GM12878 (cell line): ENCODE measurements at regions of chr16 and their contacts with region 1.

Region 1: GRCh38 chr16:75555707-75556430 is at the start of gene TMEM231:
- DNase-seq: no peak
- ATAC-seq: peak; percentile 96
- H3K4me3 ChIP-seq: peak within 1 kb of the TSS; percentile 81
- H3K27ac ChIP-seq: peak within 1 kb of the TSS; percentile 65
- H3K4me1 ChIP-seq: peaks cover 4% of the 10 kb centered on the region; the same call in 1 of the 2 replicates
- H3K27me3 ChIP-seq: no peaks in the 10 kb centered on the region
- CTCF ChIP-seq: no peak
- EP300 ChIP-seq: 0 out of 4 replicates have a peak, but pooled peaks of 1 of the 2 experiments have one; percentile 21
- POLR2A ChIP-seq: peak; percentile 72
- RAD21 ChIP-seq: no peak
- polyA plus RNA-seq, gene TMEM231: 1.2 TPM

Region 2: DNA sequence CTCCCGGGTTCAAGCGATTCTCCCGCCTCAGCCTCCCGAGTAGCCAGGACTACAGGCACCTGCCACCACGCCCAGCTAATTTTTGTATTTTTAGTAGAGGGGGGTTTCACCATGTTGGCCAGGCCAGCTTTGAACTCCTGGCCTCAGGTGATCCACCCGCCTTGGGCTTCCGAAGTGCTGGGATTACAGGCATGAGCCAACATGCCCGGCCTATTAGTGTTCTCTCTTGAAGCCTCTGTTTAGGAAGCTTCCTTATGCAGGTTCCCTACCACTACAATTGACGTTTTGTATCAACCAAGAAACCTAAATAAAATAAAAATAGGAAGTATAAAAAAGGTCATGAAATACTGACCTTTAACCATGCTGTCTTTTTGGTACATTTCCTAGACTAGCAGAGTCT is 36.0 kb before region 1 on chr16:
- CTCF ChIA-PET with region 1: interaction called, 32 read pairs
- POLR2A ChIA-PET with region 1: interaction called, 7 read pairs
- RAD21 ChIA-PET with region 1: interaction called, 5 read pairs
- SMC1A ChIA-PET with region 1: interaction called, 4 read pairs
- in situ Hi-C with region 1: no loop called
- intact Hi-C with region 1: loop called (anchors 5 kb)
- DNase-seq: no peak
- ATAC-seq: no peak
- H3K4me3 ChIP-seq: no peak overlapping the region
- H3K27ac ChIP-seq: no peak overlapping the region
- H3K4me1 ChIP-seq: no peaks in the 10 kb centered on the region
- H3K27me3 ChIP-seq: no peaks in the 10 kb centered on the region
- CTCF ChIP-seq: no peak
- EP300 ChIP-seq: no peak
- POLR2A ChIP-seq: no peak
- RAD21 ChIP-seq: no peak

Region 3: DNA sequence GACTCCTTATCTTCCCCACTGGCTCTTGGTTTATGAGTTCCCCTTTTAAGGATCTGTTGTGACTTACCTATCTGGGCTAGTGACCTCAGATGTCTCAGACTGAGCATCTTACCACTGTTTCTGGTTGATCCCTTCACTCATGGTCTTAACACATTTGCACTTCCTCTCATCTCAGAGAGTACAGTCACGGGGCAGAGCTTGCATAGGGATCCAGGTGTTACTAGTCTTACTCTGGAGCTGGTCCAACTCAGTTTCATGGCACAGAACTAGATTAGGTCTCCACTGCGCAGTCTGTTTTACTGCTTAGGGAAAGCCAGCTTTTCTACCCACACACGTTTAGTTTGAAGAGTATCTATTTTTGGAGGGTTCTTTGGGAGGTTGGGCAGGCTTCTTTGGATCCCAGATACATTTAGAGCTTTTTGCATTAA is 20.5 kb after region 1 on chr16:
- CTCF ChIA-PET with region 1: interaction called, 7 read pairs
- POLR2A ChIA-PET with region 1: interaction called, 3 read pairs
- RAD21 ChIA-PET with region 1: interaction called, 10 read pairs
- SMC1A ChIA-PET with region 1: interaction called, 9 read pairs
- in situ Hi-C with region 1: no loop called
- intact Hi-C with region 1: no loop called
- DNase-seq: no peak
- ATAC-seq: peak; percentile 49
- H3K4me3 ChIP-seq: no peak overlapping the region
- H3K27ac ChIP-seq: peak overlapping the region; percentile 49
- H3K4me1 ChIP-seq: peaks cover 63% of the 10 kb centered on the region
- H3K27me3 ChIP-seq: no peaks in the 10 kb centered on the region
- CTCF ChIP-seq: no peak
- EP300 ChIP-seq: no peak
- POLR2A ChIP-seq: no peak
- RAD21 ChIP-seq: no peak

Region 4: DNA sequence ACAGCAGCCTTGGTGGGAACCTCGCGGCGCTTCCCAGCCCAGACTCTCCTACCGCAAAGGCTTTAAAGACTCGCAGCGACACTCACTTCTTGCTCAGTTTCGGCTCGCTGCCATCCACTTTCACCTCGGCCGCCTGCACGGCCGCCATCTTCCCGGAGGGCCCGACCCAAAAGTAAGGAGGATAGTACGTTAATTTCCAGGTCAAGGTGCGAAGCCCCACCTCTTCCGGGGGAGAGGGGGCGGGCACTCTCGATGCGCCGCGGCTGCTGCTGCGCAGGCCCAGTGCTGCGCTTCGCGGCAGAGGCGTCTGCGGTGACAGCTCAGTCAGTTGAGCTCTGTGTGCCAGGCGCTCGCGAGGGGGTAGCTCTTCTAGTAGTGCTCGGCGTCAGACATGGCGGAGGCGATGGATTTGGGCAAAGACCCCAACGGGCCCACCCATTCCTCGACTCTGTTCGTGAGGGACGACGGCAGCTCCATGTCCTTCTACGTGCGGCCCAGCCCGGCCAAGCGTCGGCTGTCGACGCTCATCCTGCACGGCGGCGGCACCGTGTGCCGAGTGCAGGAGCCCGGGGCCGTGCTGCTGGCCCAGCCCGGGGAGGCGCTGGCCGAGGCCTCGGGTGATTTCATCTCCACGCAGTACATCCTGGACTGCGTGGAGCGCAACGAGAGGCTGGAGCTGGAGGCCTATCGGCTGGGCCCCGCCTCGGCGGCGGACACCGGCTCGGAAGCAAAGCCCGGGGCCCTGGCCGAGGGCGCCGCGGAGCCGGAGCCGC is 91.8 kb after region 1 on chr16 and contains the starts of genes KARS1 and TERF2IP:
- CTCF ChIA-PET with region 1: interaction called, 4 read pairs
- POLR2A ChIA-PET with region 1: interaction called, 12 read pairs
- RAD21 ChIA-PET with region 1: interaction called, 9 read pairs
- SMC1A ChIA-PET with region 1: interaction called, 4 read pairs
- in situ Hi-C with region 1: no loop called
- intact Hi-C with region 1: no loop called
- DNase-seq: peak; percentile 85
- ATAC-seq: peak; percentile 91
- H3K4me3 ChIP-seq: peak within 1 kb of the TSS; percentile 85
- H3K27ac ChIP-seq: peak within 1 kb of the TSS; percentile 86
- H3K4me1 ChIP-seq: peaks cover 25% of the 10 kb centered on the region
- H3K27me3 ChIP-seq: no peaks in the 10 kb centered on the region; a peak in 1 of 4 replicates
- CTCF ChIP-seq: no peak
- EP300 ChIP-seq: no peak
- POLR2A ChIP-seq: peak; percentile 98
- RAD21 ChIP-seq: no peak
- polyA plus RNA-seq, gene KARS1: 187 to 207 TPM
- polyA plus RNA-seq, gene TERF2IP: 19.6 to 40.6 TPM

Region 5: DNA sequence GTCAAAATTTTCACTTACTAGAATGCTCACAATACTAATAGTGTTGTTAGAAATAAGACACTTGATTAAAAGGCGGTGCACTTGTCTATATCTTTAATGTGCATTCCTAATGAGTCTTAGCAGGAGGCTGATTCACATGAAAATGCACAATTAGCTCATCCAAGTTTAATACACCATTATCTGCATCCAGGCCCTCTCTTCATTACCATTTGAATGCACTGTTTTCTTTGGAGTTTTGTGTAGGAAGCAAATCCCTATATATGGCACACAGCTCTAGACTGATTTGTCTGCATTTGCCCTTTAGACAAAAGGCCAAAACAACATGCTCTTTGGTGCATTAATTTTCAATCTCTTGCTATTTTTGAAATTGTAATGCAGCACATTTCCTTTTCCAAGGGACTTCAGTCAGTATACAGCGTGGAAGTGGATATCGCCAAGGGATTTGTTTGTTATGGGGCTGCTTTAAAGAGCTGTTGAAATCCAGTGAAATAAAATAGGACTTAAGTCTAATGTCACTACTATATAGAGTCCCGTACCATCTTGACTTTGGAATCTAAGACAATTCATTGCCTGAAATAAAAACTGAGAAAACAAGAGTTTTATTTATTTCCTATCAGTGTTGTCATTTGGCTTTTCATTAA is 428.0 kb after region 1 on chr16:
- CTCF ChIA-PET with region 1: no interaction called
- POLR2A ChIA-PET with region 1: no interaction called
- RAD21 ChIA-PET with region 1: no interaction called
- SMC1A ChIA-PET with region 1: no interaction called
- in situ Hi-C with region 1: no loop called
- intact Hi-C with region 1: no loop called
- DNase-seq: no peak
- ATAC-seq: no peak
- H3K4me3 ChIP-seq: no peak overlapping the region
- H3K27ac ChIP-seq: no peak overlapping the region
- H3K4me1 ChIP-seq: no peaks in the 10 kb centered on the region
- H3K27me3 ChIP-seq: no peaks in the 10 kb centered on the region
- CTCF ChIP-seq: no peak
- EP300 ChIP-seq: no peak
- POLR2A ChIP-seq: no peak
- RAD21 ChIP-seq: no peak